ENCODE measurements at regions of chr4 and their contacts with region 1.

Region 1: GRCh38 chr4:55321707-55322264 is 24.3 kb upstream of the SRD5A3 start:
- DNase-seq: peak; percentile 55 to 60
- H3K4me3 ChIP-seq: no peak overlapping the region
- H3K27ac ChIP-seq: no peak overlapping the region
- H3K4me1 ChIP-seq: peaks cover 7% of the 10 kb centered on the region
- H3K27me3 ChIP-seq: no peaks in the 10 kb centered on the region
- CTCF ChIP-seq: peak; percentile 77

Region 2: DNA sequence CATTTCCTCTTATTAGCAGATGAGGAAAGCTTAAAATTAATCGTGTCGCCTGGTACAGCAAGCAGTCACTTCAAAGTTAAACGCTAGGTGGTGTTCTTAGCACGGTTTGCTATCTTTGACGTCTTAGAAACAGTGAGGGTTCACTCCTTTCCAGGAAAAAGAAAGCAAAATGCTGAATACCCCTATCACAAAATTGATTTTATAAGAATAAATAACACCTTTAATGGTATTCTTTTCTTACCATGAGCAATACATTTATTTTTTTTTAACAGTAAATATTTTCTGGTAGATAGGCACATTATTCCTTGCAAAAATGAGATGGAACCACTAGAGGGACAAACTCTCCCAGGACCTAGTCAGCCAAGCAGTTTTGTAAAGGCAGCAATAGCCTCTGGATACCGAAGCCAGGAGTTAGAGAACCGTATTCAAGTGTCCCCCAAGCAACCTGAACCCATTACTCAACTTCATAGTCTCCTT is 350.3 kb before region 1 on chr4:
- CTCF ChIA-PET with region 1: no interaction called
- POLR2A ChIA-PET with region 1: no interaction called
- intact Hi-C with region 1: loop called (anchors 1 kb)
- DNase-seq: peak in 1 of 2 experiments; percentile 2
- H3K4me3 ChIP-seq: no peak overlapping the region
- H3K27ac ChIP-seq: no peak overlapping the region
- H3K4me1 ChIP-seq: no peaks in the 10 kb centered on the region
- H3K27me3 ChIP-seq: no peaks in the 10 kb centered on the region
- CTCF ChIP-seq: peak; percentile 88